ENCODE measurements at regions of chr4 and their contacts with region 1.

Region 1: GRCh38 chr4:113355550-113356371 is 306.3 kb downstream of the ANK2 start:
- DNase-seq: peak; percentile 79
- H3K4me3 Mint-ChIP-seq: peak overlapping the region; percentile 60
- H3K27ac Mint-ChIP-seq: peak overlapping the region; percentile 89
- H3K4me1 Mint-ChIP-seq: peaks cover 42% of the 10 kb centered on the region
- H3K27me3 Mint-ChIP-seq: peaks cover 54% of the 10 kb centered on the region

Region 2: GRCh38 chr4:113278324-113278934 is 77.3 kb before region 1 on chr4:
- intact Hi-C with region 1: loop called (anchors 1 kb)
- DNase-seq: peak; percentile 39
- H3K4me3 Mint-ChIP-seq: no peak overlapping the region
- H3K27ac Mint-ChIP-seq: no peak overlapping the region
- H3K4me1 Mint-ChIP-seq: no peaks in the 10 kb centered on the region
- H3K27me3 Mint-ChIP-seq: peaks cover 16% of the 10 kb centered on the region

Region 3: DNA sequence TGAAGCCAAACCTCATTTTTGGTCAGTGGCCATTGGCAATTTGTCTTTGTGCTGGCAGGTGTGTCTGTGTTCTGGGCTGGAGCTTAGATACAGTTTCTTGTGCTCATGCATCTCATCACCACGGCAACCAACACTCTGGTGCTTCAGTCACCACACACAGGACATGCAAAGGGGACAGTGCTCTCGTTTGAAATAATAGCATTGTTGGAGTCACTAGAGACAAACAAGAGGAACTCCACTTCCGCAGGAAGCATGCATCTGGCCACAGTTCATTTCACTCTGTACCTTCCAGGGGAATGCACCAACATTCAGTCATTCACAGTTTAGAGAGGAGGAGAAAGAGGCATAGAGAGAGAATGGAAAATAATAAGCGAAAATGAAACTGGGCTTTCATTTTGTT is 38.9 kb before region 1 on chr4:
- intact Hi-C with region 1: loop called (anchors 5 kb)
- DNase-seq: no peak
- H3K4me3 Mint-ChIP-seq: no peak overlapping the region
- H3K27ac Mint-ChIP-seq: no peak overlapping the region
- H3K4me1 Mint-ChIP-seq: peaks cover 11% of the 10 kb centered on the region
- H3K27me3 Mint-ChIP-seq: peaks cover 10% of the 10 kb centered on the region

Region 4: GRCh38 chr4:113445286-113445685 is 89.5 kb after region 1 on chr4:
- intact Hi-C with region 1: loop called (anchors 5 kb)
- DNase-seq: no peak
- H3K4me3 Mint-ChIP-seq: no peak overlapping the region
- H3K27ac Mint-ChIP-seq: peak overlapping the region; percentile 80
- H3K4me1 Mint-ChIP-seq: peaks cover 25% of the 10 kb centered on the region
- H3K27me3 Mint-ChIP-seq: no peaks in the 10 kb centered on the region

Region 5: GRCh38 chr4:113547487-113548042 is 191.8 kb after region 1 on chr4:
- intact Hi-C with region 1: loop called (anchors 1 kb)
- DNase-seq: peak; percentile 90
- H3K4me3 Mint-ChIP-seq: no peak overlapping the region
- H3K27ac Mint-ChIP-seq: peak overlapping the region; percentile 3
- H3K4me1 Mint-ChIP-seq: peaks cover 30% of the 10 kb centered on the region
- H3K27me3 Mint-ChIP-seq: no peaks in the 10 kb centered on the region

Region 6: DNA sequence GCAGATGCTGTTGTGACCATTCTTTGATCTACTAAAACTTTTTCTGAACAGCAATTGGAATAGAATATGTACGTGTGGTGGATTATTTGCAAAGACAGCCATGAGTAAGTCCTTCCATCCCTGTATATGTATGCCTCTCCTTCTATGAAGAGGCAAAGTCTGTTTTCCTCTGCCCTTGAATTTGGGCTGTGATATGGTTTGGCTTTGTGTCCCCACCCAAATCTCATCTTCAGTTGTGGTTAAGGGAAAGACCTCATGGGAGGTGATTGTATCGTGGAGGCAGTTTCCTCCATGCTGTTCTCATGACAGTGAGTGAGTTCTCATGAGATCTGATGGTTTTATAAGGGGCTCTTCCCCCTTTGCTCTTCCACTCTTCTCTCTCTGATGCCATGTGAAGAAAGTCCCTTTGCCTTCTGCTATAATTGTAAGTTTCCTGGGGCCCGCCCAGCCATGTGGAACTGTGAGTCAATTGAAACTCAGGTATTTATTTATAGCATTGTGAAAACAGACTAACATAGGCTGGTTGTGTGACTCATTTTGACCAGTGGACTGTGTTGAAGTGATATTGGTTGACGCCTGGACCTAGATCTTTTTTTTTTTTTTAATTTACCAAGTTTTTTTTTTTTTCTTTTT is 514.1 kb after region 1 on chr4:
- intact Hi-C with region 1: loop called (anchors 2 kb)
- DNase-seq: no peak
- H3K4me3 Mint-ChIP-seq: no peak overlapping the region
- H3K27ac Mint-ChIP-seq: peak overlapping the region; percentile 85
- H3K4me1 Mint-ChIP-seq: peaks cover 5% of the 10 kb centered on the region
- H3K27me3 Mint-ChIP-seq: no peaks in the 10 kb centered on the region

Measured in activated T-helper 2 cell treated with anti-CD3 and anti-CD28 coated beads, Interferon-gamma antibody, Interleukin-2, Interleukin-4, amounts not matched to agents 10 μg/mL and 5 μg/mL and 100 μg/mL, durations not matched to agents 14 hours and 24 hours and 36 hours (primary cell).